HEK293 (cell line): ENCODE measurements at regions of chr9 and their contacts with region 1.

Region 1: DNA sequence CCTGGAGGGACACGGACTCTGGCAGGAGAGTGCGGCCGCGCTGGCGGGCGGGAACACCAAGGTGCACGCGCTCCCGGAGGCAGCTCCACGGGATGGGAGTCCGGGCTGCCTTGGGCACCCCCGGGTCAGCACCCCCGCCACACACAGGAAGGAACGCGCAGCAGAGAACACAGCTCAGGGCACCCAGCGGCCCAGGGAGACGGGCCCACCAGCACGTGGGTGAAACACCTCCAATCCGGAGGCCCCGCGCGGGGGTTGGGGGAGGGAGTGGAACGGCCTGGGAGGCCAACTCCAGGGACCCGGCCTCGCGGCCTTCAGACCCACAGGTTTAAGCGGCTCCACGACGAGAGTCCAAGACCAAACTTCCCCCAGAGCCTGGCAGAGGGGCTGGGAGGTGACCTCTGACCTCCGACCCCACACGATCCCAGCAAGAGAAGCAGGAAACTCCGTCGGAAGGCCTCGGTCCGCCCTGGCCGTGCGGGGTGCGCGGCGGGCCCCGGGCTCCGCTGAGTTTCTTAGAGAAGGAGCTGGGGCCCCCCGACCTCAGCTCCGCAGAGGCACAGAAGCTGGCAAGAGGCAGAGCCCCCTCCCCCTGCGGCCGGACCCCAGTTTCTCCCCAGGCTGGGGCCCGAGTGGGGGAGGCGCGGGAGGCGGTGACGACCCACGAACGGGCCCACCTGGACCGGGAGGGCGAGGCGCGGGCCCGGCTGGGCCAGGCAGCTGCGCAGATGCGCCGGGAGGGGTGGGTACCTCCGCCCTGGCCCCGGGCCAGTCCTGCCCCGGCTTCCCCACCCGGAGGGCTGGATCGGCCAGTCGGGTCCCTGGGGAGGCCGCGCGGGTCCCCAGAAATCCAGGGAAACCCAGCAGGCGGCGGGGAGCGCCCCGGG is 851 bp downstream of the NACC2 start:
- H3K4me3 ChIP-seq: peak overlapping the region; percentile 63
- H3K27ac ChIP-seq: peak overlapping the region; percentile 88
- H3K4me1 ChIP-seq: peaks cover 3% of the 10 kb centered on the region
- CTCF ChIP-seq: peak; percentile 30; the same call in 1 of the 2 replicates

Region 2: GRCh38 chr9:136051517-136052432 is 42.5 kb before region 1 on chr9:
- CTCF ChIA-PET with region 1: interaction called, 4 read pairs
- POLR2A ChIA-PET with region 1: interaction called, 14 read pairs
- H3K4me3 ChIP-seq: peak overlapping the region; percentile 53
- H3K27ac ChIP-seq: peak overlapping the region; percentile 98
- H3K4me1 ChIP-seq: peaks cover 8% of the 10 kb centered on the region
- CTCF ChIP-seq: no peak; the same call in 1 of the 2 replicates

Region 3: DNA sequence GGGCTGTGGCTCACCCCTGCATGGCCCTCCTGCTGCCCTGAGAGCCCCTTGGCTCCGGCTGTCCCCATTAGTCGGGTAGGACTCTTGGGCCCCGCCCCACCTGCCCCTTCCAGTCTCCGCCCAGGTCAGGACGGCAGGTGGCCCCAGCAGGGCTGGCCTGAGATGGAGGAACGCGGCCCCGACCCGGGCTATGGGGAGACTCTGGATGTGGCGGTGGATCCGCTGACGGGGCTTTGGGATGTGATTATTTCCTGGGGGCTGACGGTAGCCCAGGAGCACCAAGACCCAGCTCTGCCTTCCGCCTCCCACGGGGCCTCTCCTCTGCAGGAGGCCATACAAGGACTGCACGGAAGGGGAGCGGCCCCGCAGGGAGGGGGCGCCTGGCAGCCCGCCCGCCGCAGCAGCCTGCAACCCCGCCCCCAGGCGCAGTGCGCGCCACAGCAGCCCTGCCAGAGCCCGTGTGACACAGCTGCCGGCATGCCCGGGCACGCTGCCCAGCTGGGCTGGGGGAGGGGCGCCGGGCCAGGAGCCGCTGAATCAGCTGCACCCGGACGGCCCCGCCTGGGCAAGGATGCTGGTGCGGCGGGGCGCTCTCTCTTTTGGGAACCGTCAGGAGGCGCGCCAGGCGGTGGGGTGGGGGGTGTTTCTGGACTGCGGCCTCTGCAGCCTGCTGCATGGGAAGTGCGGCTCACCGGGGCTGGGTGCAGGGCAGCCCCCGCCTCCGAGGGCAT is 15.3 kb after region 1 on chr9:
- CTCF ChIA-PET with region 1: interaction called, 4 read pairs
- POLR2A ChIA-PET with region 1: interaction called, 84 read pairs
- H3K4me3 ChIP-seq: peak overlapping the region; percentile 5
- H3K27ac ChIP-seq: peak overlapping the region; percentile 92
- H3K4me1 ChIP-seq: peaks cover 8% of the 10 kb centered on the region; the same call in 1 of the 2 replicates
- CTCF ChIP-seq: peak; percentile 63; the same call in 1 of the 2 replicates

Region 4: DNA sequence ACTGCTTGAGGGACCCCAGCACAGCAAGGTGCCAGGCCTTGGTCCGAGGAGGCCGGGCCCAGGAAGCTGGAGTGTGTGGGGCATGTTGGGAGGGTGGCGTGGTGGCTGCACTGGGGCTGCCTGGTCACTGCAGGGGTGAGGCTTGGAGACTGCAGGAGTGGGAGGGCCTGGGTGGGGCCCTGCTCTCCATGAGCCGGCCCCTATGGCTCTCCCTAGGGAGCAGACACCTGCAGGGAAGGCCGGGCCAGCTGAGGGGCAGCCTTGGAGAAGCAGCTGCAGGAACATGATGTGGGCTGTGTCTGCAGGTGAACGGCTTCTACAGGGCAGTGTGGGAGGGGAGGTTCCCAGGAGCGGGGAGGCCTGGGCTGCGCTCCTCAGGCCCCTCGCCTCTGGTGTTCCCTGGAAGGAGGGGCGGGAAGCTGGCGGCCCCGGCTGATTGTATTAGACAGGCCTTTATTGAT is 66.2 kb after region 1 on chr9:
- CTCF ChIA-PET with region 1: no interaction called
- POLR2A ChIA-PET with region 1: no interaction called
- H3K4me3 ChIP-seq: no peak overlapping the region
- H3K27ac ChIP-seq: no peak overlapping the region
- H3K4me1 ChIP-seq: no peaks in the 10 kb centered on the region
- CTCF ChIP-seq: no peak